ENCODE measurements at regions of chr2 and their contacts with region 1.

Region 1: DNA sequence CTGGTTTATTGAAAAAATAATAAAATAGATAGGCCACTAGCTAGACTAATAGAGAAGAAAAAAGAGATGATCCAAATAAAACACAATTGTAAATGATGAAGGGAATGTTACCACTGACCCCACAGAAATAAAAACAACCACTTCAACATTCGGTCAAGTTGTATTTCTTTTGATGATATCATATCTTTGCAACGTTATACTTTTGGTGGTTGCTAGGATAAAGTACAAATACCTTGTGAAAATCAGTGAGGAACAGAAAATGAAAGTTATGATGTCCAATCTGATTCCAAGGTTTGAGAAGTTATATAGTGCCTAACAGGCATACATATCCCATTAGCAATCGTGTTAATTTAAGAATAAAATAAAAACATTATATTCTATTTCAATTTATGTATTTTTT is 6.6 kb upstream of the ASNSD1 start:
- DNase-seq: no peak
- H3K4me3 ChIP-seq: no peak overlapping the region
- H3K27ac ChIP-seq: no peak overlapping the region
- H3K4me1 ChIP-seq: no peaks in the 10 kb centered on the region
- H3K27me3 ChIP-seq: no peaks in the 10 kb centered on the region
- CTCF ChIP-seq: no peak
- EP300 ChIP-seq: no peak
- POLR2A ChIP-seq: no peak

Region 2: DNA sequence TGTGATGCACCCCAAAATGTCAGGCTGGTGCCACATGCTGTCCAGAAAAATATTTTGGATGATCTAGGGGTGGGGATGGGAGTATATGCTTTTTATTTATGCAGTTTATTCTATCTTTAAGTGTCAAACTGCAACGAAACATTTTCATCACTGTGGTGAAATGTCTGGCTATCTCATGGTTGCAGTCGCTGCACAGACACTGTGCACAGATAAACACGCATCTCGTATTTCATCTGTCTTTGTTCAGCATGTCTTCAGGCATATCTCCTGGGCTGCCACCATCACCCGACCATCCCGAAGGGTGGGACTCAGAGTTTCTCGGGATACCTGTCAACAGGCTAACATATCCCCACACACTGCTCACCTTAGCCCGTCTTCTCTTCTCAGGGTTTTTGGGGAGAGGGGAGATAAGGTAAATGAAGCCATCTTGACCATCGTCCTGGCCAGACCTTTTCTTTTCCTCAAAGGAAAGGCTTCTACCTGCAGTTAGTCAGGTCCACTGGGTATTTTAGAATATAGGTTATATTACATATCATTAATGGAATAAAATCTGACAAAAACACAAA is 1942.6 kb after region 1 on chr2:
- in situ Hi-C with region 1: no loop called
- intact Hi-C with region 1: loop called (anchors 5 kb)
- DNase-seq: no peak
- H3K4me3 ChIP-seq: no peak overlapping the region
- H3K27ac ChIP-seq: no peak overlapping the region
- H3K4me1 ChIP-seq: no peaks in the 10 kb centered on the region
- H3K27me3 ChIP-seq: no peaks in the 10 kb centered on the region
- CTCF ChIP-seq: no peak
- EP300 ChIP-seq: no peak
- POLR2A ChIP-seq: no peak

Measured in transverse colon (tissue), 4 donors.